OCI-LY7 (cell line): ENCODE measurements at regions of chr7 and their contacts with region 1.

Region 1: DNA sequence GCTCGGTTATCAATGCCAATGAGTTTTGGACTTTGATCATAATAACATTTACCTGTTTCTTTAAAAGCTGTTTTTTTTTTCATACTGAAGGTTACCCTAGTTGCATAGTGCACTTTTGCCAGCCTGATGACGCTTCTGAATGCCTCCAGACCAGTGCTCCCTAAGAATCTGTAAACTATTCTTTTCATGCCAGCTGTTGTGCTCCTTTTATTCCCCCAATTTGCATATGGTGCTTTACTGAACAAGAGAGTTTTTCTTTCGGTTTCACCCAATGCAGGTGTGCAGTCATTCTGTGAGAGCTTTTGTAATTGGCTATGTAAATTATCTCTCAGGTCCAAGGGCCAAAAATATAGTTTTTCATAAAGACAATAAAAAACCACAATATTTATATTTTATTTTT is 48.1 kb upstream of the GLCCI1 start:
- DNase-seq: peak; percentile 94
- H3K4me3 ChIP-seq: peak overlapping the region; percentile 48
- H3K27ac ChIP-seq: peak overlapping the region; percentile 87
- H3K4me1 ChIP-seq: peaks cover 74% of the 10 kb centered on the region
- CTCF ChIP-seq: no peak

Region 2: GRCh38 chr7:7257899-7258692 is 662.4 kb before region 1 on chr7:
- CTCF ChIA-PET with region 1: no interaction called
- POLR2A ChIA-PET with region 1: no interaction called
- intact Hi-C with region 1: loop called (anchors 10 kb)
- DNase-seq: peak; percentile 60
- H3K4me3 ChIP-seq: peak overlapping the region; percentile 65
- H3K27ac ChIP-seq: peak overlapping the region; percentile 86
- H3K4me1 ChIP-seq: peaks cover 44% of the 10 kb centered on the region
- CTCF ChIP-seq: no peak

Region 3: DNA sequence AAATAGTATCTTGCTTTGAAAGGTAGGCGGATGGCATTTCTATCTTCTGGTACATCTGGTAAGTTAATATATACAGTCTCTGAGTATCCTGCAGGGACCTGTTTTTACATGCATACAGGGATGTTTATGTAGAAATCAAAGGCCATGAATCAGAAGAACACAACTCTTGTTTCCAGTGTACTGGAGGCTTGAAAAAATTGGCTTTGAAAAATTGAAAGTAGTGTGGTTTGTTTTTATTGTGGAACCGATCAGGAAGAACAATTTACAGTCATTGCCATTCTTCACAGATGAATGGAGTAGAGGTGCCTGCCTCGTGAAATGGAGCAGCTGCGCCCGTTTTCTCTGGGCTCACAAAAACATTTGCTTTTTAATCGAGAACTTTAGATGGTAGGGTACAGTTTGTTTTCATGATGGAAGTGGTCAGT is 148.1 kb before region 1 on chr7:
- CTCF ChIA-PET with region 1: no interaction called
- POLR2A ChIA-PET with region 1: interaction called, 16 read pairs
- intact Hi-C with region 1: loop called (anchors 5 kb)
- DNase-seq: peak; percentile 50
- H3K4me3 ChIP-seq: peak overlapping the region; percentile 56
- H3K27ac ChIP-seq: peak overlapping the region; percentile 35
- H3K4me1 ChIP-seq: peaks cover 29% of the 10 kb centered on the region
- CTCF ChIP-seq: no peak

Region 4: GRCh38 chr7:7932580-7932979 is 12.1 kb after region 1 on chr7:
- CTCF ChIA-PET with region 1: interaction called, 3 read pairs
- POLR2A ChIA-PET with region 1: interaction called, 45 read pairs
- intact Hi-C with region 1: no loop called
- DNase-seq: no peak
- H3K4me3 ChIP-seq: no peak overlapping the region
- H3K27ac ChIP-seq: no peak overlapping the region
- H3K4me1 ChIP-seq: no peaks in the 10 kb centered on the region
- CTCF ChIP-seq: no peak

Region 5: GRCh38 chr7:7944619-7945282 is 24.3 kb after region 1 on chr7:
- CTCF ChIA-PET with region 1: no interaction called
- POLR2A ChIA-PET with region 1: interaction called, 38 read pairs
- intact Hi-C with region 1: loop called (anchors 1 kb)
- DNase-seq: peak; percentile 91
- H3K4me3 ChIP-seq: peak overlapping the region; percentile 56
- H3K27ac ChIP-seq: peak overlapping the region; percentile 91
- H3K4me1 ChIP-seq: peaks cover 37% of the 10 kb centered on the region
- CTCF ChIP-seq: no peak